HEK293T (cell line): ENCODE measurements at regions of chr6 and their contacts with region 1.

Region 1: DNA sequence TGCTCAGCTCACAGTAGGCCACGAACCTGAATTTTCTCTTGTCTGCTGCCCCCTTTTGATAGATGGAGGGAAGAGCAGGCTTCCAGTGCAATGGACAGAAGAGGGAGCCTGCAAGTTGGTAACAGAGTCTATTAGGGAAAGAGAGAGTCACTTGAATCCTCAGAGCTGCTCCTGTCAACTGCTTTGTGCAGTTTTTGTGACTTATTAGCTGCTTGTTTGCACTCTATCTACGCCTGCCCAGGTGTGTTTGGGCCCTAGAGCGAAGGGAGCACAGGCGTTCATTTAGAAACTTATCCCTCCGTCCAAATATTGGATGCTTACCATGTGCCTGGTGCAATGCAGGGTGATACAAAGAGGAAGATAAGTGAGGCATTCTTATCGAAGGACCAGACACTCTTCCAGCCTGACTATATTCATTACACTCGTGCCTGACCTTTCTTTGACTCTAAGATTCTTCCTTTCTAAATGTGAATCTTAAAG is 11.6 kb upstream of the SLC2A12 start:
- DNase-seq: peak; percentile 90

Region 2: DNA sequence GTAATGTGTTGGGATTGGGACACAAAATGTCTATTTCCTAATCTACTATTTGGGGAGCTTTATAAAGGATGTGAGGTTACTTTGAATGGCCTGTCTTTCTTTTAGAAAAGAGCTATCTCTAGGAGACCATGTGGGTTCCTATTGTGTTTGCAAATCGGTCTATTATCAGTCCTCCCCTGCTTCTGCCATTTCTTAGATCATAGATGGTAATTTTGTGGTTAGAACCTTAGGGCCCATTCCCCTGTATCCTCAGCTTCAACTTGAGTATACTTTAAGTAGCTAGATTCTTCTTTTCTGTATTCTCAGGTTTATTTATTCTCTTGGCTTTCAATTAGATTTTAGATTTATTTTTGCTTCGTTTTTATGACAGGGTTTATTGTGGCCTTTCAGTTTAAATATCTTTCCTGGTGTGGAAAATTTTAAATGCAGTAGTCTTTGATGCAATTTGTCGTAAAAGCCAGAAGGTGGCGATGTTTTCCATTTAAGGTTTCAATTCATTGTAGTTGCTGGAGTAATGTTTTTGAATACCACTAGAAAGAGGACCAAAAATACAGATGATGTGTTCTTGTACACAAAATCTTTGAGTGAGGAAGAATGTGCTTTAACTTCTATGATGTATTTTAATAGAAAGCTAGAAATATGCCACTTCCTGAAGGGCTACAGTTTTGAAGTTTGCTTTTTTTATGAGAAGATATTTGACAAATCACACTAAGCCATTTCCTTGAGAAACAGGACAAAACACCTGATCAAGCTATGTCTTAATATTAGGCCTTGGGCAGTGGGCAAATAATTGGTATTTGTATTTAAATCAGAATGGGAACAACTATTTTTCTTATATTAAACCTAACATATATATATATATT is 90.7 kb before region 1 on chr6:
- CTCF ChIA-PET with region 1: interaction called, 31 read pairs
- POLR2A ChIA-PET with region 1: no interaction called
- DNase-seq: peak; percentile 42

Region 3: DNA sequence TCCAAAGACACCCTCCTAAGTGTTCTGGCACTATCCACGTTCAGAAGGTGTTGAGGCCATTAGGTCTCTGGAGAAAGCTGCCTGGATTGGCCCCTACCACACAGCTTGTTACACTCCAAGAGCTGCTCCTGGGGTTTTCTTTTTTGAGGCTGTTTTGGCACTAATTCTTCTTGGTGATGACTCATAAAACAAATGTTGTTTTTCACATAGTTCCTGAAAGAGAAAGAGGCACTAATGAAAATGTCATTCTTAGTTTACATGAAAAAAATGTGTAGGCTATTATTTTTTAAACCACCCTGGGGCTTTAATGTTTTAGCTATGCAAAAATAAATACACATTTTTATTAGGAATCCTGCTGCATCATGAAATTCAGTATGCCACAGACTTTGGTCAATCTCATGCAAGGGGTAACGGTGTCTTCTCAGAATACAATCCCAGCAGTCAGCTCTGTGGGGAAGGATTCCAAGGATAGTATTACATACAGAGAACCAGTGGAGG is 72.9 kb before region 1 on chr6:
- CTCF ChIA-PET with region 1: interaction called, 10 read pairs
- POLR2A ChIA-PET with region 1: interaction called, 3 read pairs
- DNase-seq: no peak

Region 4: GRCh38 chr6:134074151-134075055 is 10.4 kb after region 1 on chr6:
- CTCF ChIA-PET with region 1: interaction called, 12 read pairs
- POLR2A ChIA-PET with region 1: no interaction called
- DNase-seq: no peak

Region 5: GRCh38 chr6:135224037-135224647 is 1160.1 kb after region 1 on chr6:
- CTCF ChIA-PET with region 1: no interaction called
- POLR2A ChIA-PET with region 1: no interaction called
- DNase-seq: no peak